PC-3 (cell line): ENCODE measurements at regions of chr14 and their contacts with region 1.

Region 1: DNA sequence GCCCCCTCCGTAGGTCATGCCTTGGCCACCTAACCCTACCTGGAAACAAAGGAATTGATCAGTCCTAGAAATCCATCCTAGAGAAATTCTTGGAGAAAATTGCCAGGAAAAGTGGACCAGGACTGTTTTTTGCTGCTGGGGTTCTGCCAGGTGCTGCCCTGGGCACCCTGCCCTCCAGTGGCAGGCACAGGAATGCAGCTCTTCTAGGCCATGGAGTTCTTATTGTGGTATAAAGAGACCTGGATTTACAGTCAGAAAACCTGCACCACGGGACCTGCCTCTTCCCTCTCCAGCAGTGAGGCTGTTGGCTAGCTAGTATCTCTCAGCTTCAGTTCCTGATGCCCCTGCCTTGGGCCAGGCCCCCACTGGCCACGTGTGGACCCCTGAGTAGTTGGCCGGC is 59.7 kb downstream of the SLC24A4 start:
- DNase-seq: peak; percentile 55
- ATAC-seq: peak; percentile 57
- H3K4me3 ChIP-seq: no peak overlapping the region
- H3K27ac ChIP-seq: no peak overlapping the region
- H3K4me1 ChIP-seq: peaks cover 3% of the 10 kb centered on the region; the same call in 1 of the 2 replicates
- H3K27me3 ChIP-seq: no peaks in the 10 kb centered on the region
- CTCF ChIP-seq: peak; percentile 71

Region 2: DNA sequence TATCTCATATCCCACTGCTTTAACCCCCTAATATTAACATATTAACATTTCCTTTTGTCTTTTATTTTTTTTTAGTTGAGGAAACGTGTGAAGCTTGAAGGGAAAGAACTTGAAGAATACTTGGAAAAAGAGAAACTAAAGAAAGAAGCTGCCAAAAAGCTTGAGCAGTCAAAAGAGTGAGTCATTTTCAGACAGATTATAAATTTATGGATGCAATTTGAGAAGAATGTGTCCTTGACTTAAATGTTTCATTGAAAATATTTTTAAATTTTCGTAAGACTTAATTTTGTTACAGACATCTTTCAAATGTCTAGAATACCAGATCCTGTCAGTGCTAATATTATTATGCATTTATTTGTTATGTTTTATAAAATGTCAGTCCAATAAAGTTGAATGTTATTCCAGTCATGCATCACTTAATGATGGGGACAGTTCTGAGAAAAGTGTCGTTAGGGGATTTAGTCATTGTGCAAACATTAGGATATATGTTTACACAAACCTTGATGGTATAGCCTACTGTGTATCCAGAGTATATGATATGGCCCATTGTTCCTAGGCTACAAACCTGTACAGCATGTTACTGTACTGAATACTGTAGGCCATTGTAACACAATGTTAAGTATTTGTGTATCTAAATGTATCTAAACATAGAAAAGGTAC is 228.3 kb before region 1 on chr14:
- CTCF ChIA-PET with region 1: interaction called, 3 read pairs
- POLR2A ChIA-PET with region 1: no interaction called
- intact Hi-C with region 1: loop called (anchors 10 kb)
- DNase-seq: peak; percentile 86
- ATAC-seq: peak; percentile 99
- H3K4me3 ChIP-seq: no peak overlapping the region
- H3K27ac ChIP-seq: peak overlapping the region; percentile 75
- H3K4me1 ChIP-seq: peaks cover 26% of the 10 kb centered on the region
- H3K27me3 ChIP-seq: no peaks in the 10 kb centered on the region
- CTCF ChIP-seq: no peak